CD8-positive, alpha-beta memory T cell (primary cell): ENCODE measurements at regions of chr11 and their contacts with region 1.

Region 1: DNA sequence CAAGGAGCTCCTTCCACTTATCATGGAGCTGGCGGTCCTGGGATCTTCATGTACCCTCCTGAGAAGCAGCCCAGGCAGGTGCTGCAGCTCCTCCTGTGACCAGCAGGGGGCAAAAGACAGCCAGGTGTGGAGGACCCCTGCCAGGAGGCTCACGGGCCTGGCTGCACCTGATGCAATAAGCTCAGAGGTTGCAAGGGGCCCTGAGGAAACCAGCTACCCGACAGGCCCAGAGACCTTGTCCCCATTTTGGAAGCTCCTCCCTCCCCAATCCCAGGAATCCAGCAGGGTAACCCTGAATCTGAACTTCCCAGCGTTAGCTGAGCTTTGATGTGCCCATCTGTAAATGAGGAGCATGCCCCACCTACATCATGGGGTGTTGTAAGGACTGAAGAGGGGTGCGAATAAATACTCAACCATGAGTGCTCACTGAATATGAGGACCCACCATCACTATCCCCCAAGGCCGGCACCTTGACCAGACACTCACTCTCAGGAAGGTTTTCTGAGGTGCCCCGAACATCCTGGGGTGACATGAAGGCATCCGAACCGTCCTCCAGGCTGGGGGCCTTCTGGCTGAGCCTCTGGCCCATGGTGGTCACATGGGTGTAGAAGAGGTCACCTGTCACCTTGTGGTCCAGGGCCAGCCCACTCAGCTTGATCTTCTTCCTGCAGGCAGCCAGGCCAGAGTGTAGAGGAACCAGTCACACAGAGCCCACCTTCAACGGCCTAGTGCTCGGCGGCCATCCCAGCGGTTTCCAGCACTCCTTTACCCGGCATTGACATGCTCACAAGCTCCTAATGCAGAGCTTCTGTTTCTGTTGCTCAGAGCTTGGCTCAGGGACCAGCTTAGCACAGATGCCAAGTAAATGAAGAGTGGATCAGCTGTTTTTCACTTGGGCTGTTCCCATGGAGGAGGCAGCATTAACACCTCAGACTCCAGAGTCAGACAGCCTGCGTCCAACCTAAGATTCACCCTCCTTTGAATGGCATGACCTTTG is 21.7 kb downstream of the SLC43A1 start:
- DNase-seq: peak; percentile 61 to 83 (median 66)
- H3K4me3 ChIP-seq: no peak overlapping the region
- H3K4me3 Mint-ChIP-seq: no peak overlapping the region
- H3K27ac ChIP-seq: no peak overlapping the region
- H3K27ac Mint-ChIP-seq: no peak overlapping the region
- H3K4me1 ChIP-seq: no peaks in the 10 kb centered on the region
- H3K4me1 Mint-ChIP-seq: no peaks in the 10 kb centered on the region
- H3K27me3 ChIP-seq: no peaks in the 10 kb centered on the region
- H3K27me3 Mint-ChIP-seq: no peaks in the 10 kb centered on the region

Region 2: GRCh38 chr11:57368106-57368844 is 125.5 kb before region 1 on chr11:
- CTCF ChIA-PET with region 1: no interaction called
- POLR2A ChIA-PET with region 1: no interaction called
- DNase-seq: no peak
- H3K4me3 ChIP-seq: no peak overlapping the region
- H3K4me3 Mint-ChIP-seq: no peak overlapping the region
- H3K27ac ChIP-seq: no peak overlapping the region
- H3K27ac Mint-ChIP-seq: no peak overlapping the region
- H3K4me1 ChIP-seq: no peaks in the 10 kb centered on the region
- H3K4me1 Mint-ChIP-seq: no peaks in the 10 kb centered on the region
- H3K27me3 ChIP-seq: no peaks in the 10 kb centered on the region
- H3K27me3 Mint-ChIP-seq: peaks cover 9 to 17% of the 10 kb centered on the region in 2 donors

Region 3: GRCh38 chr11:57474017-57474802 is 19.6 kb before region 1 on chr11:
- CTCF ChIA-PET with region 1: interaction called, 29 read pairs
- POLR2A ChIA-PET with region 1: no interaction called
- DNase-seq: peak; percentile 8 to 68 (median 36)
- H3K4me3 ChIP-seq: peak overlapping the region; percentile 28
- H3K4me3 Mint-ChIP-seq: peak overlapping the region; percentile 34 to 90 (median 56)
- H3K27ac ChIP-seq: no peak overlapping the region
- H3K27ac Mint-ChIP-seq: peak overlapping the region in 5 of 8 donors; percentile 11 to 84 (median 70)
- H3K4me1 ChIP-seq: peaks cover 27% of the 10 kb centered on the region
- H3K4me1 Mint-ChIP-seq: peaks cover 22 to 44% (median 22%) of the 10 kb centered on the region in 3 donors
- H3K27me3 ChIP-seq: peaks cover 5% of the 10 kb centered on the region
- H3K27me3 Mint-ChIP-seq: peaks cover 1 to 3% of the 10 kb centered on the region in 2 donors

Region 4: DNA sequence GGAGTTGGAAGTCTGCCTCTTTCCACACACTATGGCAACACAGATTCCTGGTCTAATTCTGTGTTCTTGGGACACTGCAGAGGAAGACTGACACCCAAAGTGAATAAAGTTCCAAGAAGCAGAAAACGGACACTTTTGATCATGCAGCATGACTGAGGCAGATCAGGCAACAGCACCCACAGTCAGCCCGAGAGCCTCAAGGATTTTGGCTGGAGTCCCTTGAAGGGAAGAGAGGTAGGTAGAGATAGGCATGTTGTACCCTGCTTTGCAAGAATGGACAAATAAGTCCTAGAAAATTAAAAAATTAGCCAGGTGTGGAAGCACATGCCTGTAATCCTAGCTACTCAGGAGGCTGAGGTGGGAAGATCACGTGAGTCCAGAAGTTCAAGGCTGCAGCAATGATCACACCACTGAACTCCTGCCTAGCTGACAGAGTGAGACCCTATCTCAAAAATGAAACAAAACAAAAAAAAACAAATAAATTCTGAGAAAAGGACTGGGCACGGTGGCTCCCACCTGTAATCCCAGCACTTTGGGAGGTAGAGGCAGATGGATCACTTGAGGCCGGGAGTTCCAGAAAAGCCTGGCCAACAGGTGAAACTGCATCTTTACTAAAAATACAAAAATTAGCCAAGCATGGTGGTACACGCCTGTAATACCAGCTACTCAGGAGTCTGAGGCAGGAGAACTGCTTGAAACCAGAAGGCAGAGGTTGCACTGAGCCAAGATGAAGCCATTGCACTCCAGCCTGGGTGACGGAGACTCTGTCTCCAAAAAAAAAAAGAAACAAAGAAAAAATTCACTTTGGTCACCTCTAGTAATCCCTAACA is 14.8 kb after region 1 on chr11:
- CTCF ChIA-PET with region 1: interaction called, 498 read pairs
- POLR2A ChIA-PET with region 1: no interaction called
- DNase-seq: no peak
- H3K4me3 ChIP-seq: no peak overlapping the region
- H3K4me3 Mint-ChIP-seq: no peak overlapping the region
- H3K27ac ChIP-seq: no peak overlapping the region
- H3K27ac Mint-ChIP-seq: peak overlapping the region in 2 of 8 donors; percentile 55 to 75
- H3K4me1 ChIP-seq: peaks cover 7% of the 10 kb centered on the region
- H3K4me1 Mint-ChIP-seq: peaks cover 23 to 34% (median 30%) of the 10 kb centered on the region in 3 donors
- H3K27me3 ChIP-seq: no peaks in the 10 kb centered on the region
- H3K27me3 Mint-ChIP-seq: no peaks in the 10 kb centered on the region

Region 5: GRCh38 chr11:57530596-57531507 is 37.0 kb after region 1 on chr11 and contains the start of gene TIMM10:
- CTCF ChIA-PET with region 1: interaction called, 498 read pairs
- POLR2A ChIA-PET with region 1: interaction called, 11 read pairs
- DNase-seq: peak; percentile 84 to 97 (median 95)
- H3K4me3 ChIP-seq: peak within 1 kb of the TSS; percentile 88
- H3K4me3 Mint-ChIP-seq: peak within 1 kb of the TSS; percentile 85 to 96 (median 90)
- H3K27ac ChIP-seq: peak within 1 kb of the TSS; percentile 86
- H3K27ac Mint-ChIP-seq: peak within 1 kb of the TSS; percentile 89 to 99 (median 97)
- H3K4me1 ChIP-seq: peaks cover 19% of the 10 kb centered on the region
- H3K4me1 Mint-ChIP-seq: peaks cover 26 to 41% (median 35%) of the 10 kb centered on the region in 3 donors
- H3K27me3 ChIP-seq: no peaks in the 10 kb centered on the region
- H3K27me3 Mint-ChIP-seq: peaks cover 0 to 3% of the 10 kb centered on the region in 2 donors
- total RNA-seq, gene TIMM10: 151 to 154 TPM